ENCODE measurements at regions of chr17 and their contacts with region 1.

Region 1: GRCh38 chr17:78442648-78443128 is 64.2 kb downstream of the PGS1 start:
- DNase-seq: no peak
- H3K4me3 ChIP-seq: no peak overlapping the region
- H3K4me3 Mint-ChIP-seq: no peak overlapping the region
- H3K27ac ChIP-seq: no peak overlapping the region
- H3K27ac Mint-ChIP-seq: no peak overlapping the region
- H3K4me1 ChIP-seq: no peaks in the 10 kb centered on the region
- H3K4me1 Mint-ChIP-seq: peaks cover 0 to 5% (median 3%) of the 10 kb centered on the region in 4 donors
- H3K27me3 ChIP-seq: no peaks in the 10 kb centered on the region
- H3K27me3 Mint-ChIP-seq: no peaks in the 10 kb centered on the region

Region 2: GRCh38 chr17:78840725-78841611 is 398.3 kb after region 1 on chr17 and contains the start of gene USP36:
- CTCF ChIA-PET with region 1: interaction called, 3 read pairs
- POLR2A ChIA-PET with region 1: no interaction called
- intact Hi-C with region 1: loop called (anchors 1 kb)
- DNase-seq: peak; percentile 99 to 100 (median 99)
- H3K4me3 ChIP-seq: peak within 1 kb of the TSS; percentile 74 to 89
- H3K4me3 Mint-ChIP-seq: peak within 1 kb of the TSS; percentile 93 to 99 (median 96)
- H3K27ac ChIP-seq: peak within 1 kb of the TSS; percentile 95
- H3K27ac Mint-ChIP-seq: peak within 1 kb of the TSS; percentile 93 to 99 (median 99)
- H3K4me1 ChIP-seq: peaks cover 40% of the 10 kb centered on the region
- H3K4me1 Mint-ChIP-seq: peaks cover 37 to 73% (median 49%) of the 10 kb centered on the region in 4 donors
- H3K27me3 ChIP-seq: no peaks in the 10 kb centered on the region
- H3K27me3 Mint-ChIP-seq: no peaks in the 10 kb centered on the region
- total RNA-seq, gene USP36: 181 to 183 TPM